GM12878 (cell line): ENCODE measurements at regions of chr2 and their contacts with region 1.

Region 1: DNA sequence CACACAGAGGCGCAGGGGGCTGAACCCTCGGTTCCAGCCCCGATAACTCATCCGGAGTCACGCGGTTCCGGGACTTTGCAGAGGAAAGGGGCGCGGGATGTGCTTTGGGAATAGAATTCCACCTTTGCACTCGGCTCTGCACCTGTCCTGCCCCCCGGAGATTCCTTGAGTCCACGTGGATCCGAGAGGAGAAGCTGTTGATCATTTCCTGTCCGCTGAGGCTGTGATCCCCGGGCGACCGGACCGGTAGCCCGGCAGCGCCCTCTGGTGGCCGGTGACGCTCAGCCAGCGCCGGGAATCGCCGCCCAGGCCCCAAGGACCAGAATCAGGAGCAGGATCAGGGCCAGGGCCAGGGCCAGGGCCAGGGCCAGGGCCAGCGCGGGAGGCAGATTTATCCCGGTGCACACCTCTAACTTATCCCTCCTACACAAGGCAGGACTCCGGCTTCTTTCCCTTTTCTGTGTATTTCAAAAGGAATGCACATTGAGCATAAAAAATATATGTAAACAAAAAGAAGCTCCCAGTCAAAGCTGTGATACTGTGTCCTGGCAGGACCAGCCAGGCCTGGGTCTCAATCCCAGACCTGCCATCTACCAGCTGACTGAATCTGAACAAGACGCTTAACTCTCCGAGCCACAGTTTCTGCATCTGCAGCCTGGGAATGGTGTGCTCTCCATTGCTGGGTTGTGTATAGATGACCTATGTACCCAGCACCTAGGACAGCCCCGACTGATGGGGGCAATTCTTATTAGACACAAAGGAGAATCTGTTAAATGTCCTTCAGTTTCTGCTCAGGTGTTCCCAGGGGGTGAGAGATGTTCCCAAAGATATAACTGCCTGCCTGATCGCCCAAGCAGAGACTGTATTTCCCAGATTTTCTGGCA is 8.5 kb upstream of the SPATA3 start:
- DNase-seq: no peak
- ATAC-seq: peak; percentile 49
- H3K4me3 ChIP-seq: peak overlapping the region; percentile 89
- H3K27ac ChIP-seq: peak overlapping the region; percentile 100
- H3K4me1 ChIP-seq: peaks cover 42% of the 10 kb centered on the region
- H3K27me3 ChIP-seq: no peaks in the 10 kb centered on the region; a peak in 1 of 4 replicates
- CTCF ChIP-seq: peak; percentile 85 to 98 (median 92); a peak in 5 of 6 replicates
- EP300 ChIP-seq: no peak
- POLR2A ChIP-seq: no peak
- RAD21 ChIP-seq: peak; percentile 98

Region 2: DNA sequence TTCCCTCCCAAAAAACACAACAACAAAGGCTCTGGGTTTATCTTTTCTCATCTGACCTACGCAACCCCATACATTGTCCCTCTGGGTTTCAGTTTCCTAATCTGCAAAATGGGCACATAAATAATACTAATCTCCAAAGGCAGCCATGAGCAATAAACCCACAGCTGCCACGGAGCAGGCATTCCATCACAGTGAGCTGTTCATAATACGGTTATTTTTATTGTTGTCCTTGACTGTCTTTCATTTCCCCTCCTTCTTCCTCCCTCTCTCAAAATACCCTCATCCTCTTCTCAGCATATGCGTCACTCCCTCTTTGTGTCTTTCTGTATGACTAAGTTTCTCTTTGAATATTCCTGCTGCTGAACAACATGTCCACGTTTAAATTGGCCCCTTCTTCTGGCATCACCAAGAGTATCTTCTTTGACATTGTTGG is 404.5 kb before region 1 on chr2:
- CTCF ChIA-PET with region 1: no interaction called
- POLR2A ChIA-PET with region 1: no interaction called
- RAD21 ChIA-PET with region 1: no interaction called
- SMC1A ChIA-PET with region 1: no interaction called
- in situ Hi-C with region 1: no loop called
- intact Hi-C with region 1: no loop called
- DNase-seq: peak; percentile 88
- ATAC-seq: peak; percentile 76
- H3K4me3 ChIP-seq: peak overlapping the region; percentile 44; the same call in 1 of the 2 replicates
- H3K27ac ChIP-seq: peak overlapping the region; percentile 97
- H3K4me1 ChIP-seq: peaks cover 57% of the 10 kb centered on the region
- H3K27me3 ChIP-seq: no peaks in the 10 kb centered on the region
- CTCF ChIP-seq: no peak
- EP300 ChIP-seq: peak; percentile 76 to 77; a peak in 3 of 4 replicates
- POLR2A ChIP-seq: no peak
- RAD21 ChIP-seq: no peak

Region 3: DNA sequence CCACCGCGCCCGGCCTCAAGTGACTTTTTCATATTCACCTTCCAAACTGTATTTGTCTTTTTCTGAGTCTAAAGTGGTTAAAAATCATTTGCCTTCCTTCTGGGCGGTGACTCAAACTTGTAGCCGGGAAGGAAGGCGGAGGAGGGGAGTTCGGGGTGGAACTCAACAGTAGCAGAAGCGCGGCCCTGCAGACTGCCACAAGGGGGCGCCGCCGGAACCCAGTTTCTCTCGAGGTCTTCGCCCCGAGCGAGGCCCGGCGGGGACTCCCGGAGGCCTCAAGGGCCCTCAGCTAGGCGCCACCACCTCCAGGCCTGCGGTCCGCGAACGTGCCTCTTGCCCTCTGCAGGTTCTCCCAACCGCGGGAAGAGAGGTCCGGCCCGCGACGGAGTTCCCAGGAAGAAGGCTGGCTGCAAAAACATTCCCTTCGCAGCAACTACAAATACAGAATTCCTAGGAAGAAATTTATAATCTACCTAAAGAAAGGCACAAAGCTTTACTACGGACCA is 139.4 kb before region 1 on chr2:
- CTCF ChIA-PET with region 1: interaction called, 57 read pairs
- POLR2A ChIA-PET with region 1: interaction called, 3 read pairs
- RAD21 ChIA-PET with region 1: interaction called, 6 read pairs
- SMC1A ChIA-PET with region 1: interaction called, 31 read pairs
- in situ Hi-C with region 1: no loop called
- intact Hi-C with region 1: loop called (anchors 1 kb)
- DNase-seq: peak; percentile 44
- ATAC-seq: peak; percentile 100
- H3K4me3 ChIP-seq: no peak overlapping the region; the same call in 1 of the 2 replicates
- H3K27ac ChIP-seq: no peak overlapping the region
- H3K4me1 ChIP-seq: peaks cover 5% of the 10 kb centered on the region; the same call in 1 of the 2 replicates
- H3K27me3 ChIP-seq: peaks cover 0 to 3% of the 10 kb centered on the region in 2 experiments; a peak in 1 of 4 replicates
- CTCF ChIP-seq: peak; percentile 84 to 96 (median 91)
- EP300 ChIP-seq: no peak
- POLR2A ChIP-seq: no peak
- RAD21 ChIP-seq: peak; percentile 69

Region 4: DNA sequence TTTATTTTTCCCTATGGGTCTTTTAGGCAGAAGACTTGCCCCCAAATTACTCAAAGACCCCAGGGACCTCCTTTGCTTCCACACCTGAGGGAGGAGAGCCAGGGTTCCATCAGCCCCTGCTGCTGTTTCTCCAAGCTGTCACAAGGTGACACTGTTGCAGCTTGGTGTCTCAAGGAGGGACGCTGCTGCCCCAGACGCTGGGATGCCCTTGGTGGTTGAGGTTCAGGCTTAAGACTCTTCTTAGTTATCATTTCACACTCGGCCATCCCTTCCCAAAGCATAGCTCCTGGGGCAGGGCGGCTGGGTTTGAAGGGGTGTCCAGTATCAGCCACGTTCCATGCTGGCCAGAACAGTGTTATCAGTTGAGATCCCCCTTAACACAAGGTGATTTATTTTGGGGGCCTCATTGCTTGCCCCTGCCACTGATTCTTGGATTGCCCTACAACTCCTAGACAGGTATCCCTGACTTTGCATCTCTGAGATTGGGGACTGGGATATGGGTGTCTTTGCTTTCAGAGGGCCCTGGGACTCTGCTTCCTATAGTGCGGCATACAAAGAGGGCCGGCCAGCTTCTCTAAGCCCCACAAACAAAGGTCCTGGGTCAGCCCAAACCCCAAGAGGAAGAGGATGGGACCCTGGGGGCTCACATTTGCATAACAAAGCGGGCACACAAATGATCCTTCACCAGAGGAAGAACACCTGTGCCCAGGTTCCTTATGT is 85.0 kb before region 1 on chr2:
- CTCF ChIA-PET with region 1: interaction called, 198 read pairs
- POLR2A ChIA-PET with region 1: interaction called, 8 read pairs
- RAD21 ChIA-PET with region 1: interaction called, 99 read pairs
- SMC1A ChIA-PET with region 1: interaction called, 122 read pairs
- in situ Hi-C with region 1: loop called (anchors 5 kb)
- intact Hi-C with region 1: loop called (anchors 1 kb)
- DNase-seq: no peak
- ATAC-seq: peak; percentile 94
- H3K4me3 ChIP-seq: no peak overlapping the region
- H3K27ac ChIP-seq: no peak overlapping the region
- H3K4me1 ChIP-seq: peaks cover 14% of the 10 kb centered on the region
- H3K27me3 ChIP-seq: no peaks in the 10 kb centered on the region
- CTCF ChIP-seq: peak; percentile 98 to 99 (median 98); a peak in 5 of 6 replicates
- EP300 ChIP-seq: no peak
- POLR2A ChIP-seq: no peak
- RAD21 ChIP-seq: peak; percentile 99

Region 5: DNA sequence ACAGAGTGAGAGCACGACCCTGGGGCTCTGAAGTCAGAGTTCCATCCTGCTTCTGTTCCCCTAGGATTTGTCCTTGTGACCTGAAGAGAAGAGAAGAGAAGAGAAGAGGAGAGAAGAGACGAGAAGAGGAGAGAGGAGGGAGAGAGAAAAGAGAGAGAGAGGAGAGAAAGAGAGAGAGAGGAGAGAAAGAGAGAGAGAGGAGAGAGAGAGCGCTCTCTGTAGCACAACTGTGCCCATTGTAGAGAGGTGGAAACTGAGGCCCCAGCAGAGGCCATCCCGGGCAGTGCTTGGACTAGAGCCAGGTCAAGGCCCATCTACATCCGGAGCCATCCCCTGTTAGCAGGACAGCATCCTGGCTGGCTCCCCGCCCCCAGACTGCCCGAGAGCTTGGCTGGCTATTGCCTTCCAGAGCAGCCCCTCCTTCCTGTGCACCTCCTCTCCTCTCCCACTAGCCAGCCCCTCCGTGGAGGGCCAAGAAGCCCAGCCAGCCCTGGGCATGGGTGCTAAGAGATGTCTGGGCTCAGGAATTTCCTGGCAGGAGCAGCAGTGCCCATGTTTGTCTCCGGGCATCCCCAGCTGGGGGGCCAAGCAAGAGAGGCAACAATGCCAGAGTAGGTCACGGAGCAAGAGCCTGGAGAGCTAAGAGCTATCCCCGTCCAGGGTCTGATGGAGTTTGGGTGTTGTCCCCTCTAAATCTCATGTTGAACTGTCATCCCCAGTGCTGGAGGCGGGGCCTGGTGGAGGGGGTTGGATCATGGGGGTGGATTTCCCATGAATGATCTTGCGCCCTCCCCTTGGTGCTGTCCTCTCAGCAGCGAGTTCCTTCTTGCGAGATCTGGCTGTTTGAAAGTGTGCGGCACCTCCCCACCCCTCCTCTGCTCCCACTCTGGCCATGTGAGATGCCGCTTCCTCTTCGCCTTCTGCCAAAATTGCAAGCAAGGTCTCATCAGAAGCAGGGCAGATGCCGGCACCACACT is 44.2 kb before region 1 on chr2:
- CTCF ChIA-PET with region 1: interaction called, 372 read pairs
- POLR2A ChIA-PET with region 1: interaction called, 144 read pairs
- RAD21 ChIA-PET with region 1: interaction called, 400 read pairs
- SMC1A ChIA-PET with region 1: interaction called, 411 read pairs
- in situ Hi-C with region 1: loop called (anchors 5 kb)
- intact Hi-C with region 1: loop called (anchors 1 kb)
- DNase-seq: peak; percentile 82
- ATAC-seq: peak; percentile 79
- H3K4me3 ChIP-seq: peak overlapping the region; percentile 85
- H3K27ac ChIP-seq: peak overlapping the region; percentile 99
- H3K4me1 ChIP-seq: peaks cover 27% of the 10 kb centered on the region
- H3K27me3 ChIP-seq: no peaks in the 10 kb centered on the region
- CTCF ChIP-seq: no peak
- EP300 ChIP-seq: no peak
- POLR2A ChIP-seq: peak; percentile 78
- RAD21 ChIP-seq: no peak

Region 6: DNA sequence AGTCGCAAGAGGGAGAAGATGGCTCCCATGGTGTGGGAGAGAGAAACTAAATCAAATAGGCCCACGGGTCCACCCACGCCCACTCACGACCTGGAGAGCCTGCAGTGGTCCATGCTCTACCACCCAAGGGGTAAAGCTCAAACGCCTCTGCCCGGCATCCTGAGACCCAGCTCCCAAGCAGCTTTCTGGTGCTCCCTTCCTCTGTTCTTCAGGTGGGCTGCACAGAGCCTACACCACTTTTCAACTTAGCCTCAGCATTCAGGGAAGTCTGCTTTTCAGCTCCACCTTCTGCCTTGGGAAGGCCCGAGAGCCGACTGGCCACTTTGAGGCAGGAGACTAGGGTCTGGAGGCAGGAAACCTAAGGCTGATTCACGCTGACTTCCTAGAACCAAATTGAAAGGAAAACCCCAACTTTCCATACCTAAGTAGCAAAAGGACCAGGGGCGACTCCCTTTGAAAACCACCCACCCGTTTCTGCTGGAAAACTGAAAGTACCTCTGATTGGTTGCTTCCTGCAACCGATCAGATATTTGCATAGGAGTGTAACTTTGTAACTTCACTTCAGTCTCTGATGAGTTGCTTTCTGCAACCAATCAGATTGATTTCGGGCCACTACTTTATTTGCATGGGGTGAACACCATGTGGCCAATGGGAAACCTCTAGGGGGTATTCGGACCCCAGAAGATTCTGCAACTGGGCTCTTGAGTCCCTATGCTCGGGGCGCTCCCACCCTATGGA is 18.3 kb before region 1 on chr2:
- CTCF ChIA-PET with region 1: interaction called, 71 read pairs
- POLR2A ChIA-PET with region 1: interaction called, 60 read pairs
- RAD21 ChIA-PET with region 1: interaction called, 114 read pairs
- SMC1A ChIA-PET with region 1: interaction called, 151 read pairs
- in situ Hi-C with region 1: no loop called
- intact Hi-C with region 1: loop called (anchors 1 kb)
- DNase-seq: no peak
- ATAC-seq: no peak; the same call in 2 of the 3 replicates
- H3K4me3 ChIP-seq: peak overlapping the region; percentile 13; the same call in 1 of the 2 replicates
- H3K27ac ChIP-seq: peak overlapping the region; percentile 56; the same call in 1 of the 2 replicates
- H3K4me1 ChIP-seq: peaks cover 18% of the 10 kb centered on the region
- H3K27me3 ChIP-seq: no peaks in the 10 kb centered on the region
- CTCF ChIP-seq: no peak
- EP300 ChIP-seq: no peak
- POLR2A ChIP-seq: no peak
- RAD21 ChIP-seq: no peak